GM12878 (cell line): ENCODE measurements at regions of chr7 and their contacts with region 1.

Region 1: DNA sequence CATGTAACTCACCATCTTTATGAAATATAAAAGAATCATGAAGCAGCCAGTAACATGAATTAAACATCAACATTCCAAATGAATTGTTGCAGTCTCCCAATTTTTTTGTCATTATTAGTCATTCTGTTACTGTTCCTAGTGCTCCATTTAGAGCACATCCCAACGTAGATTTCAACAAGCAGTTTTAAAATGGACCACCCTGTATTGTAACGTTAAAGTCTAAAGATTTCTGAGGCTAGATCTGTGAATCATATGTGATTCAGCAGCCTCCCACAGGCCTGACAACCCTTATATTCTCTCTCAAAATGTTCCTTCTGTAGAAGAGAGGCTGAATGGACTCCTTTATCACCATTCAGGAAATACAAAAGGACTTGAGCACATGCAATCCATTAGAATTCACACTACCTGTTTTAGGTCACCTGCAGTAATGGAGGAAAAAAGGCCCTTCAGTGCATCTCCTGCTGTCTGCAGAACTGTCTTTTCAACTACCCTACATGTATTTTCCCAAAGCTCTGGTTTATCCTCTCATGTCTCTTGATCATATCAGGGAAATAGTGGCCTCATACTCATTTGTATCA is 81.4 kb downstream of the CACNA2D1 start:
- DNase-seq: no peak
- ATAC-seq: no peak
- H3K4me3 ChIP-seq: no peak overlapping the region
- H3K27ac ChIP-seq: no peak overlapping the region
- H3K4me1 ChIP-seq: no peaks in the 10 kb centered on the region
- H3K27me3 ChIP-seq: no peaks in the 10 kb centered on the region
- CTCF ChIP-seq: no peak
- EP300 ChIP-seq: no peak
- POLR2A ChIP-seq: no peak
- RAD21 ChIP-seq: no peak

Region 2: GRCh38 chr7:82234457-82235049 is 127.7 kb before region 1 on chr7:
- CTCF ChIA-PET with region 1: interaction called, 11 read pairs
- POLR2A ChIA-PET with region 1: interaction called, 3 read pairs
- RAD21 ChIA-PET with region 1: interaction called, 16 read pairs
- SMC1A ChIA-PET with region 1: interaction called, 15 read pairs
- in situ Hi-C with region 1: no loop called
- intact Hi-C with region 1: loop called (anchors 10 kb)
- DNase-seq: no peak
- ATAC-seq: peak; percentile 60
- H3K4me3 ChIP-seq: no peak overlapping the region
- H3K27ac ChIP-seq: no peak overlapping the region
- H3K4me1 ChIP-seq: no peaks in the 10 kb centered on the region
- H3K27me3 ChIP-seq: no peaks in the 10 kb centered on the region
- CTCF ChIP-seq: peak; percentile 34 to 51 (median 49); a peak in 5 of 6 replicates
- EP300 ChIP-seq: no peak
- POLR2A ChIP-seq: no peak
- RAD21 ChIP-seq: peak; percentile 69

Region 3: DNA sequence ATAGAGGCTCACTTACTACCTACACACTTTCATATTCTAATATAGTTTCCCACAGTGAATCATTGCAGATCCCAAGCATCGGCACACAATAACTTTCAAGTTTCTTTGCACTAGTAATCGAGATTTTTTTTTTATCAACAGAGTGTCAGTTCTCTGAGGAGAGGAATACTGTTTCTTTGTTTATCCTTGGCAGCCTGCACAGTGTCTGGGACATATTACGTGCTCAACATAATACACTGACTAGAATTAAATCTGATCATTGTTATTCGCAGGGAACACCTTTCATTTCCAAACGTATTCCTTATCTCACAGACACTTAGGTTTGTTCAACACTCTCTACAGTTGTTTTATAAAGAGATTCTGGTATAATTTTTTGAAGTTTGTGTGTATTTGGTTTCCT is 14.0 kb before region 1 on chr7:
- CTCF ChIA-PET with region 1: interaction called, 18 read pairs
- POLR2A ChIA-PET with region 1: interaction called, 3 read pairs
- RAD21 ChIA-PET with region 1: interaction called, 7 read pairs
- SMC1A ChIA-PET with region 1: interaction called, 24 read pairs
- in situ Hi-C with region 1: no loop called
- intact Hi-C with region 1: no loop called
- DNase-seq: no peak
- ATAC-seq: peak; percentile 16; the same call in 2 of the 3 replicates
- H3K4me3 ChIP-seq: no peak overlapping the region
- H3K27ac ChIP-seq: no peak overlapping the region
- H3K4me1 ChIP-seq: no peaks in the 10 kb centered on the region
- H3K27me3 ChIP-seq: no peaks in the 10 kb centered on the region
- CTCF ChIP-seq: no peak
- EP300 ChIP-seq: no peak
- POLR2A ChIP-seq: no peak
- RAD21 ChIP-seq: no peak